ENCODE measurements at regions of chr7 and their contacts with region 1.

Region 1: GRCh38 chr7:34430458-34430857 is 227.6 kb upstream of the NPSR1 start:
- DNase-seq: peak; percentile 54
- H3K4me3 ChIP-seq: no peak overlapping the region
- H3K27ac ChIP-seq: no peak overlapping the region
- H3K4me1 ChIP-seq: no peaks in the 10 kb centered on the region
- H3K27me3 ChIP-seq: no peaks in the 10 kb centered on the region
- CTCF ChIP-seq: peak; percentile 66

Region 2: DNA sequence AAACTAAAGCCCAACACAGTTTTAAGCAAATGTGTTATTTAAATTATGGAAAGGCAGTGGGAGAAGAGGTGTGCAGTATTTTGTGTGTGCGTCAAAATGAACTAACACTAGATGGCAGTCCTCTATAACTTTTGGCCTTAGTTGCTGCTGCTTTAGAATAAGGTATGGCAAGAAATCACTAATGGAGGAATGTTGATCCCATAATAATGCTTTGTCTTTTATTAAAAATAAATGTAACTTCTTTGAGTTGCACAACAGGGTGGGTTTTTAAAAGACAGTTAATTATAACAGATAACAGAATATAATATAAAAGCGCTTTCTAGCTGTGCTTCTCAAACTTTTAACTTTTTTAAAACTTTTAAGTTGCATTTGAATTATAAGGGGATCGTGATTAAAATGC is 1244.7 kb before region 1 on chr7:
- CTCF ChIA-PET with region 1: interaction called, 11 read pairs
- POLR2A ChIA-PET with region 1: no interaction called
- intact Hi-C with region 1: no loop called
- DNase-seq: peak; percentile 67
- H3K4me3 ChIP-seq: no peak overlapping the region
- H3K27ac ChIP-seq: no peak overlapping the region
- H3K4me1 ChIP-seq: peaks cover 6% of the 10 kb centered on the region
- H3K27me3 ChIP-seq: no peaks in the 10 kb centered on the region
- CTCF ChIP-seq: peak; percentile 83

Region 3: GRCh38 chr7:34133983-34134782 is 296.3 kb before region 1 on chr7:
- CTCF ChIA-PET with region 1: no interaction called
- POLR2A ChIA-PET with region 1: no interaction called
- intact Hi-C with region 1: loop called (anchors 1 kb)
- DNase-seq: peak; percentile 81
- H3K4me3 ChIP-seq: no peak overlapping the region
- H3K27ac ChIP-seq: no peak overlapping the region
- H3K4me1 ChIP-seq: peaks cover 21% of the 10 kb centered on the region
- H3K27me3 ChIP-seq: no peaks in the 10 kb centered on the region
- CTCF ChIP-seq: peak; percentile 81

Region 4: GRCh38 chr7:34321000-34321581 is 109.4 kb before region 1 on chr7:
- CTCF ChIA-PET with region 1: no interaction called
- POLR2A ChIA-PET with region 1: no interaction called
- intact Hi-C with region 1: loop called (anchors 1 kb)
- DNase-seq: peak; percentile 66
- H3K4me3 ChIP-seq: no peak overlapping the region
- H3K27ac ChIP-seq: no peak overlapping the region
- H3K4me1 ChIP-seq: no peaks in the 10 kb centered on the region
- H3K27me3 ChIP-seq: no peaks in the 10 kb centered on the region
- CTCF ChIP-seq: peak; percentile 94